PC-9 (cell line): ENCODE measurements at regions of chr9 and their contacts with region 1.

Region 1: GRCh38 chr9:136400038-136400834 is at the start of gene SNAPC4:
- DNase-seq: peak; percentile 76 to 91
- H3K4me3 ChIP-seq: peak within 1 kb of the TSS; percentile 100
- H3K27ac ChIP-seq: no peak within 1 kb of the TSS
- H3K4me1 ChIP-seq: peaks cover 13% of the 10 kb centered on the region
- H3K27me3 ChIP-seq: no peaks in the 10 kb centered on the region
- CTCF ChIP-seq: peak; percentile 85
- total RNA-seq, gene SNAPC4: 13.3 and 14.4 TPM in 2 replicates

Region 2: DNA sequence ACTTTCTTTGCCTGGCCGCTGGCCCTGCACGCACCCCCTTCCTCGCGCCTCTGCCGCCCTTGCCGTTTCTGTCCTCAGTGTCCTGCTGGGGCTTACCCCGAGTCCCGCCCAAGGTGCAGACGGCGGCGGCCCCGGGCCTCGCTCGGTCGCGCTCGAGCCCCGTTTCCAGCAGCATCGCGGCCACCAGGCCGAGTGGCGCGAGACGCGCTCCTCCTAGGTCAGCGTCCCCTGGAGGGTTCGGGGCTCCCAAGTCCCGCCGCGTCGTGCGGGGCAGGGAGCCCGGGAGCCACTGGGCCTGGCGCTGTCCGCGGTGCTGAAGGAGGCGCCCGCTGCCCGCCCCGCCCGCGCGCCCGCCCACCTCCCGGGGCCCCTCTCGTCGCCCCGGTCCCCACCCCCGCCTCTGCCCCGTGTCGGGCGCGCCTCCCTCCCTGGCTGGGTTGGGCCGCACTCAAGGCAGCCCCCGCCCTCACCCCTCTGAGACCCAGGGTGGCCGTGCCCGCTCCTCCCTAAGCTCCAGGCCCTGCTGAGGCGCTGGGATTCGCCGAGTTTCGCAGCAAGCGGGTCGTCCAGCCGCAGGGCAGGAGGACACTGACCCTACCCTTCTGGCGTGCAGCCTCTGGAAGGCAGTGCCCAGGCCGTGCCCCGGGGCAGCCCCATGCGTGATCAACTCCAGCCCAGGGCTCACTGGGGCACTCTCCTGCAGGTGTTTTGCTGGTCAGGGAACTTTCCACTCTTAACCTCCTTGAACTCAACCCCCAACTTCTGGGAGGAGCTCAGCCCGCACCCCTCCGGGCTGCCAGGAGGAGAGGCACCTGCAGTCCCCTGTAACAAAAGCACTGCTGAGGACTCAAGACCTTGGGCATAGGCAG is 195.2 kb before region 1 on chr9 and contains the start of gene LHX3:
- CTCF ChIA-PET with region 1: no interaction called
- POLR2A ChIA-PET with region 1: no interaction called
- intact Hi-C with region 1: no loop called
- DNase-seq: no peak
- H3K4me3 ChIP-seq: no peak within 1 kb of the TSS
- H3K27ac ChIP-seq: no peak within 1 kb of the TSS
- H3K4me1 ChIP-seq: no peaks in the 10 kb centered on the region
- H3K27me3 ChIP-seq: no peaks in the 10 kb centered on the region
- CTCF ChIP-seq: no peak
- total RNA-seq, gene LHX3: 0.22 and 0.43 TPM in 2 replicates

Region 3: GRCh38 chr9:136312436-136312835 is 87.8 kb before region 1 on chr9:
- CTCF ChIA-PET with region 1: interaction called, 5 read pairs
- POLR2A ChIA-PET with region 1: no interaction called
- intact Hi-C with region 1: loop called (anchors 1 kb)
- DNase-seq: peak in 1 of 2 experiments; percentile 69
- H3K4me3 ChIP-seq: no peak overlapping the region
- H3K27ac ChIP-seq: no peak overlapping the region
- H3K4me1 ChIP-seq: peaks cover 10% of the 10 kb centered on the region
- H3K27me3 ChIP-seq: peaks cover 7% of the 10 kb centered on the region; the same call in 1 of the 2 replicates
- CTCF ChIP-seq: peak; percentile 77

Region 4: GRCh38 chr9:136327313-136327974 is 72.8 kb before region 1 on chr9 and contains the start of gene GPSM1:
- CTCF ChIA-PET with region 1: no interaction called
- POLR2A ChIA-PET with region 1: no interaction called
- intact Hi-C with region 1: no loop called
- DNase-seq: peak in 1 of 2 experiments; percentile 33
- H3K4me3 ChIP-seq: peak within 1 kb of the TSS; percentile 46; the same call in 1 of the 2 replicates
- H3K27ac ChIP-seq: no peak within 1 kb of the TSS
- H3K4me1 ChIP-seq: peaks cover 11% of the 10 kb centered on the region; the same call in 1 of the 2 replicates
- H3K27me3 ChIP-seq: no peaks in the 10 kb centered on the region
- CTCF ChIP-seq: no peak
- total RNA-seq, gene GPSM1: 5.5 and 9.5 TPM in 2 replicates

Region 5: DNA sequence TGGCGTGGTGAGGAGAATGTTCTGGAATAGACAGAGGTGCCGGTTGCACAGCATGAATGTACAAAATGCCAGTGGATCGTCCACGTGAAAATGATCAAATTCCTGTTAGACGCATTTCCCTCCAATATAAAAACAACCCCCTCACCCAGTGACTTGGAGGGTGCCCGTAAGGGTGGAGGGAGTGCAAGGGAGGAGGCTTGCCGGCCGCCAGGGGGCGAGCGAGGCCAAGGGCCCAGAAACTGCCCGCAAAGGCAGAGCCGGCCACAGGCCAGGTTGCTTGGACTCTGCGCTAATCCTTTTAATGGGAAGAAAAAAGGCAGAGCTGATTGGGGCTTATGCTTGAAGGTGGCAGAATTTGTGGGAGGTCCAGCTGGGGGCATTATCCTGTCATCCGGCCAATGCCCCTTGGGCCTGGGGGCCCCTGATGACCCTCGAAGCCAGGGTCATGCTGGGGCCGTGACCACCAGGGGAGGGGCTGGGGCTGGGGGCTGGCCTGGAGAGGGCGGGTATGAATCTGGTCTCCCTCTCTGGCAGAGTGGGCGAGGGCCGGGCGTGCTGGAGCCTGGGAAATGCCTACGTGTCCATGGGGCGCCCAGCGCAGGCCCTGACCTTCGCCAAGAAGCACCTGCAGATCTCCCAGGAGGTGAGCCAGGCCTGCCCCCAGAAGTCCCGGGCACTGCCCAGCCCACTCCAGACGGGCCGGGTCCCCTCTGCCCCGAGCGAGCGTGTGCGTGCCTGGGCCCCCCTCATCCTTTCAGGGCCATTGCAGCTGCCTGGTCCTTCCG is 60.9 kb before region 1 on chr9:
- CTCF ChIA-PET with region 1: interaction called, 3 read pairs
- POLR2A ChIA-PET with region 1: no interaction called
- intact Hi-C with region 1: loop called (anchors 1 kb)
- DNase-seq: peak; percentile 56 to 85
- H3K4me3 ChIP-seq: no peak overlapping the region
- H3K27ac ChIP-seq: no peak overlapping the region
- H3K4me1 ChIP-seq: no peaks in the 10 kb centered on the region
- H3K27me3 ChIP-seq: no peaks in the 10 kb centered on the region
- CTCF ChIP-seq: peak; percentile 97

Region 6: DNA sequence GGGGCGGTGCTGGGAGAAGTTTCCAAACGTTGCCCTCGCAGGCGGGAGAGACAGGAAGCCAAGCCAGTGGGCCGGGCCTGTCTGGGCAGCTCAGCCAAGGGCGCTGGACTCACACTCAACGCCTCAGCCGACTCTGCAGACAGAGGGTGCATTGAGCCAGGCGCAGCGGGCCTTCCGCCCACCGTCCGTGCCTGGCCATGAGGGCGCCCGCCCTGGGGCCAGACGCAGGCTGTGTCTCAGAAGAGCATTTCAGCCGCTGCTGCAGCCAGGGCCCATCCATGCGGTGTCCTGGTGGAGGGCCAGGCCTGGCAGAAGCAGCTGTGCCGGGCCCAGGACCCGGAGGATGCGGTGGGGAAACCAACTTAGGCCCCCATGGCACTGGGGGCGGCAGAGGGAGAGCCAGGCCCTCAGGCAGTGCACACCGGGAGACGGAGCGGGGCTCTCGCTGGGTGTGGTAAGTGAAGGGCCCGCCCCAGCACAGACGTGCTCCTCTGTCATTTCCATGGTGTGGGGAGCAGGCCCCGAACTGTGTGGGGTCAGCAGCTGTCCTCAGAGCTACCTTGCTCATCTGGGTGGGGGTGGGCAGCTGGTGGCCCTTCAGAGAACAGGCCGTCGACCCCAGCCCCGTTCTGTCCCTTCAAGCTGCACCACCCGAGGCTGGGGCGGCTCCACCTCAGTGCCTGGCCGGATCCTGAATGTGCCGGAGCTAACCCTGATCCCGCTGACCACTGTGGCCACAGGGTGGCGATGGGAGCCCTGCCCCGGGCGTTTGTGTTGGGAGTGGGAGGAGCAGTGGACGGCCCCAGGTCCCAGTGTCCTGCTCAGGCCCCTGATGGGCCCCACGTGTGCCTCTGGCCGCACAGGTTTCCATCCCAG is 54.7 kb before region 1 on chr9:
- CTCF ChIA-PET with region 1: interaction called, 3 read pairs
- POLR2A ChIA-PET with region 1: no interaction called
- intact Hi-C with region 1: loop called (anchors 1 kb)
- DNase-seq: peak; percentile 52 to 87
- H3K4me3 ChIP-seq: no peak overlapping the region
- H3K27ac ChIP-seq: no peak overlapping the region
- H3K4me1 ChIP-seq: peaks cover 7% of the 10 kb centered on the region; the same call in 1 of the 2 replicates
- H3K27me3 ChIP-seq: no peaks in the 10 kb centered on the region
- CTCF ChIP-seq: peak; percentile 58; the same call in 1 of the 2 replicates